ENCODE measurements at regions of chr5 and their contacts with region 1.

Region 1: DNA sequence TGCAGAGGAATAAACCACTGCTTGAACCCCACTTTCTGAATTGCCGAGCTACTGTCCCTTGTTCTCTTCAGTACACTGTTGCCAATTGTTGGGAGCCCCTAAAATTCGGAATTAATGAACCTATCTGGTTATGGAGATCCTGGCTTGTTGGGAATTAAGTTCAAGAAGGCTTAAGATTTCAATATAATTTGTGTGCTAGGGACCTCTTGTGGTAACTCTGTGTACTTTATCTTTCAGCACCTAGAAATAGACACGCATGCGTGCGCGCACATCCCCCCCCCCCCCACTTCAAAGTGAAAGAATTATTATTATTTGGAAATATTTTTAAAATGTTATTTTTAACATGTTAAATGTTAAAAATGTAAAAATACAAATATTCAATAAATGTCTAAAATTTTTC is 53.3 kb upstream of the FAM169A start:
- H3K4me3 Mint-ChIP-seq: no peak overlapping the region
- H3K27ac Mint-ChIP-seq: no peak overlapping the region
- H3K4me1 Mint-ChIP-seq: no peaks in the 10 kb centered on the region
- H3K27me3 Mint-ChIP-seq: peaks cover 2% of the 10 kb centered on the region

Region 2: DNA sequence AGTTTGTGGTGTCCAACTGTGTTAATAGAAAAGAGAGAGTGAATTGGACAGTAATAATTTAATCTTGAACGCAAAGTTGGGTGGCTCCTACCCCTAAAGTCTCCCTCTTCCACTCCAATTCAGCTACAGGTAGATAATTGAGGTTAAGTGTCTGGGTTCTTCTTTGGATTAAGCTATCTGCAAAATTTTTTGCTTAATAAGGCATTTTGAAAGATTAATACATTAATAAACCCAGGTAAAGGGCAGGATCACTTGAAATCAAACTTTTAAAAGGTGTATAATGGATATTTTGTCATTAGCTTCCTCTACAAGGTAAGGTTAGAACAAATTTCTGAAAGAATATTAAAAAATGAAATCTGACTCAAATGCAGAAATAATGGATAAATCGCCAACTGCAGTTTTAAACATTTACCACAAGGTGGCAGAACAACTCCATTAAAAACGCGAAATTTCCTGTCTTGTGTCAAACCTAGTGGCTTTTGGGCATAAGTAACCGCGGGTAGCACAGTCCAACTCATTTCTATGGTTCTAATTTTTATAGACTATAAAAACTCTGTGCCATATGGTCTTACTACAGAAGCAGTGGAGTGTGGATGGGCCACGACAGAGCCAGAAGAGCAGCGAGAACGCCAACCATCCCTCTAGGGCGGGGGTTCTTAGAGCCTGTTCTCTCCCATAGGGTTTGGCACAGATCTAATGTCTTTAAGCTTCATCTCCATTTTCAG is 1017.0 kb before region 1 on chr5:
- intact Hi-C with region 1: loop called (anchors 2 kb)
- H3K4me3 Mint-ChIP-seq: no peak overlapping the region
- H3K27ac Mint-ChIP-seq: no peak overlapping the region
- H3K4me1 Mint-ChIP-seq: peaks cover 20% of the 10 kb centered on the region
- H3K27me3 Mint-ChIP-seq: no peaks in the 10 kb centered on the region

Region 3: GRCh38 chr5:74673011-74673790 is 246.3 kb before region 1 on chr5:
- intact Hi-C with region 1: loop called (anchors 1 kb)
- H3K4me3 Mint-ChIP-seq: no peak overlapping the region
- H3K27ac Mint-ChIP-seq: no peak overlapping the region
- H3K4me1 Mint-ChIP-seq: peaks cover 29% of the 10 kb centered on the region
- H3K27me3 Mint-ChIP-seq: peaks cover 31% of the 10 kb centered on the region

Region 4: DNA sequence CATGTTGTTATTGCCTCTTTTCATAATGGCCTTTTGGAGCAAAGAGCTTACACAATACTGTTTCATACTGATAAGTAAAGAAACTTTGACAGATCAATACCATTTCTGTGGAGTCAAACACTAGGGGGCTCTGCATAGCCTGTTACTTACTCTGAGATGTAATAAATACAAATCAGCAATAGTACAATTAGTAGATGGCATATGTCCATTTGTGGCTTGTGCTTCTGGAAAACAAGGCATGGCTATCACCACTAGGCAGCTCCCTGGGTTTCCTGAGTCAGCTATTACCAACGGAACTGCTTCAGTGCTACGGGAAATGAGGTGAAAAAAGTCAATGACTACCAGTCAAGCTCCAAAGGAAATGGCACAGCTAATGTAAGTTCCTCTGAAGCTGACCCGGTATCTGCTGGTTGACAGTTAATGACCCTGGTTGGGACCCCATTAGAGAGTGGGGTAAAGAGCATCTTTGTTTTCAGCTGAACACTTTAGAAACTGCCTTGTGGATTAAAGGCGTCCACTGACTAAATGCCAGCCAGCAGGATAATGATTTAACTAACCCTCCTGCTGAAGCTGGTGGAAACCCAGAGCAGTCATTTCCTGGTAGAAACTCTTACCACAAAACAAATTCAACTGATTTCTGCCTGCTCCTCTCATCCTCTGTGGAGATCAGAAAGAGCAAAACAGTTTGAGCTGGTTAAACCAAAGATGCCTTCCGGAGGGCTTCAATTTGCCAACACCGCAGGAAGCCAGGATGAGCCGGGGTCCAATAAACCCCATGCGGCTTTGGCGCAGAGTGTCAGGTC is 15.7 kb after region 1 on chr5:
- intact Hi-C with region 1: no loop called
- H3K4me3 Mint-ChIP-seq: no peak overlapping the region
- H3K27ac Mint-ChIP-seq: no peak overlapping the region
- H3K4me1 Mint-ChIP-seq: no peaks in the 10 kb centered on the region
- H3K27me3 Mint-ChIP-seq: peaks cover 20% of the 10 kb centered on the region